ENCODE measurements at regions of chr6 and their contacts with region 1.

Region 1: DNA sequence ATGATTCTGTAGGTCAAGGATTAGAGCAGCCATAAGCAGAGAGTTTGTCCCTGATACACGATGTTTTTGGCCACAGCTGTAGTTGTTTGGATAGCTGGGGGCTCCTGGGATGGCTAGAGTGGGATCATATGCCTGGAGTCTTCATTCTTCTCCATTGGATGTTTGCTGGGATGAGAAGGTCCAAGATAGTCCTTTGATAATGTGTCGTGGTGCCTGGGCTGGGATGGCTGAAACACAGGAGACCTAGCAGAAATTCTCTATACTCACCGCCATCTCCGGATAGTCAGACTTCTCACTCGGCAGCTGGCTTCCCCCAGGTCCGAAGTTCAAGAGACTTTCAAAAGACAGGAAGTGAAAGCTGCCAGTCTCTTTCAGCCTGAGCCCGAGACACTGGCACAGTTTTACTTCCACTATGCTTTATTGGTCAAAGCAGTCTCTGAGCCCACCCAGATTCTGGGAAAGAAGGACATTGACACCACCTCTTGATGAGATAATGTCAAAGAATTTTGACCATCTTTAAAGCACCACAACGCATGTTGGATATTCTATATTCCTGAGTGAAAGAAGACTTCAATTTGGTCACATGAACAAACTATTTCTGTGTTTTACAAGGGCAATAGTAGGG is 16.0 kb downstream of the MARCKS start:
- DNase-seq: peak; percentile 44 to 74 (median 47)
- ATAC-seq: peak in 1 of 2 donors; percentile 26
- H3K4me3 ChIP-seq: peak overlapping the region; percentile 22
- H3K27ac ChIP-seq: no peak overlapping the region
- H3K4me1 ChIP-seq: no peaks in the 10 kb centered on the region
- H3K27me3 ChIP-seq: no peaks in the 10 kb centered on the region

Region 2: GRCh38 chr6:112786801-112787200 is 1086.4 kb before region 1 on chr6:
- intact Hi-C with region 1: loop called in 1 of 4 experiments (anchors 5 kb)
- DNase-seq: no peak
- ATAC-seq: no peak
- H3K4me3 ChIP-seq: no peak overlapping the region
- H3K27ac ChIP-seq: no peak overlapping the region
- H3K4me1 ChIP-seq: no peaks in the 10 kb centered on the region
- H3K27me3 ChIP-seq: no peaks in the 10 kb centered on the region

Region 3: GRCh38 chr6:113782636-113783035 is 90.5 kb before region 1 on chr6:
- intact Hi-C with region 1: no loop called
- DNase-seq: no peak
- ATAC-seq: no peak
- H3K4me3 ChIP-seq: no peak overlapping the region
- H3K27ac ChIP-seq: no peak overlapping the region
- H3K4me1 ChIP-seq: no peaks in the 10 kb centered on the region
- H3K27me3 ChIP-seq: no peaks in the 10 kb centered on the region